MCF 10A (cell line): ENCODE measurements at regions of chr14 and their contacts with region 1.

Region 1: DNA sequence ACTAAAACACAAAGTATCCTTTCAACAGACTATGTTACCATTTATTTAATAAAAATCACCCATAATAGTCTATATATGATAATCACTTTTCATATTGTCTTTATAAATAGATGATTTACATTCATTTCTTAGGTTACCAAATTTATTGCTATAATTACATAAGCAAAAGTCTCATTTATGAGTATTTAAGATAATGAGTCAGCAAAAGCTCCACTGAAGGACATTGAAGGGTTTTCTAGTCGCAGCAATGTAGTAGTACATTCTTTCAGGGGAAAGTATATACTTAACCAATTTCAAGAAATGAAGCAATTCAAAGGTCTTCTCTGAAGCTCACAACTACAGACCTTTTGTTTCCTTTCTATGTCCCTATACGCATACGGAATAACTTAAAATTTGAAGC is 110.9 kb downstream of the NOVA1 start:
- DNase-seq: no peak
- H3K4me3 Mint-ChIP-seq: no peak overlapping the region
- H3K27ac Mint-ChIP-seq: no peak overlapping the region
- H3K4me1 Mint-ChIP-seq: no peaks in the 10 kb centered on the region
- H3K27me3 Mint-ChIP-seq: peaks cover 25% of the 10 kb centered on the region
- CTCF ChIP-seq: no peak

Region 2: DNA sequence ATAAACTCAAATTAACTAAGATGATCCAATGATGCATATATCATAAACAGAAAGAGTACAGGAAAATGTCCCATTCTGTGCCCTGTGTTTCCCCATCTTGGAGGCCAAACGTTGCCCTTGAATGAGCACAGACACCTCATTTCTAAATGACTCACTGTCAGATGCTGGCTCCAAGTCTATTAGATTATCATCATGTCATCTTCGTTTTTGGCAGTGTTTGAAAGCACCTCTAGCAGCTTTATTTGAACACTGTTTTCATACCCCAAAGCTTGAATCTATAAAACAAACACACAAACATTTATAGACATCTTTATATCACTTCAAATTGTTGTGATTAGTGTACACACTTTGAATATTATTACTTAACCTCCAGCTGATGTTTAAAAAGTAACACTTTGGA is 313.3 kb before region 1 on chr14:
- CTCF ChIA-PET with region 1: no interaction called
- POLR2A ChIA-PET with region 1: no interaction called
- intact Hi-C with region 1: loop called (anchors 10 kb)
- DNase-seq: no peak
- H3K4me3 Mint-ChIP-seq: no peak overlapping the region
- H3K27ac Mint-ChIP-seq: no peak overlapping the region
- H3K4me1 Mint-ChIP-seq: no peaks in the 10 kb centered on the region
- H3K27me3 Mint-ChIP-seq: peaks cover 34% of the 10 kb centered on the region
- CTCF ChIP-seq: no peak

Region 3: GRCh38 chr14:27642251-27642866 is 1155.4 kb after region 1 on chr14:
- CTCF ChIA-PET with region 1: no interaction called
- POLR2A ChIA-PET with region 1: no interaction called
- intact Hi-C with region 1: no loop called
- DNase-seq: no peak
- H3K4me3 Mint-ChIP-seq: no peak overlapping the region
- H3K27ac Mint-ChIP-seq: no peak overlapping the region
- H3K4me1 Mint-ChIP-seq: no peaks in the 10 kb centered on the region
- H3K27me3 Mint-ChIP-seq: no peaks in the 10 kb centered on the region
- CTCF ChIP-seq: no peak